Heart left ventricle (tissue), 16 donors: ENCODE measurements at regions of chr9 and their contacts with region 1.

Region 1: GRCh38 chr9:32384364-32385151 is at the start of gene ACO1:
- DNase-seq: peak; percentile 92 to 95 (median 94)
- ATAC-seq: peak; percentile 92 to 99 (median 98)
- H3K4me3 ChIP-seq: peak within 1 kb of the TSS; percentile 67 to 91 (median 83)
- H3K27ac ChIP-seq: peak within 1 kb of the TSS; percentile 52 to 93 (median 82)
- H3K4me1 ChIP-seq: peaks cover 0 to 37% (median 19%) of the 10 kb centered on the region in 12 donors
- H3K27me3 ChIP-seq: no peaks in the 10 kb centered on the region
- CTCF ChIP-seq: peak in 4 of 12 donors; percentile 19 to 35 (median 32)
- POLR2A ChIP-seq: peak; percentile 15 to 84
- total RNA-seq, gene ACO1: 44.5 to 68.3 (median 63.3) TPM

Region 2: GRCh38 chr9:32395490-32396216 is 11.1 kb after region 1 on chr9:
- intact Hi-C with region 1: loop called in 1 of 10 experiments (anchors 1 kb)
- DNase-seq: peak; percentile 39 to 73 (median 63)
- ATAC-seq: peak in 3 of 4 donors; percentile 89 to 95 (median 93)
- H3K4me3 ChIP-seq: no peak overlapping the region
- H3K27ac ChIP-seq: peak overlapping the region in 9 of 12 donors; percentile 28 to 76 (median 46)
- H3K4me1 ChIP-seq: peaks cover 0 to 22% (median 11%) of the 10 kb centered on the region in 12 donors
- H3K27me3 ChIP-seq: no peaks in the 10 kb centered on the region
- CTCF ChIP-seq: peak in 5 of 12 donors; percentile 14 to 42 (median 31)
- POLR2A ChIP-seq: no peak

Region 3: GRCh38 chr9:32426278-32426939 is 41.9 kb after region 1 on chr9:
- intact Hi-C with region 1: loop called in 7 of 10 experiments (anchors 2 to 5 kb)
- DNase-seq: no peak
- ATAC-seq: peak in 2 of 4 donors; percentile 34 to 36
- H3K4me3 ChIP-seq: no peak overlapping the region
- H3K27ac ChIP-seq: peak overlapping the region in 1 of 12 donors; percentile 7
- H3K4me1 ChIP-seq: peaks cover 0 to 5% (median 0%) of the 10 kb centered on the region in 12 donors
- H3K27me3 ChIP-seq: no peaks in the 10 kb centered on the region
- CTCF ChIP-seq: no peak
- POLR2A ChIP-seq: no peak

Region 4: DNA sequence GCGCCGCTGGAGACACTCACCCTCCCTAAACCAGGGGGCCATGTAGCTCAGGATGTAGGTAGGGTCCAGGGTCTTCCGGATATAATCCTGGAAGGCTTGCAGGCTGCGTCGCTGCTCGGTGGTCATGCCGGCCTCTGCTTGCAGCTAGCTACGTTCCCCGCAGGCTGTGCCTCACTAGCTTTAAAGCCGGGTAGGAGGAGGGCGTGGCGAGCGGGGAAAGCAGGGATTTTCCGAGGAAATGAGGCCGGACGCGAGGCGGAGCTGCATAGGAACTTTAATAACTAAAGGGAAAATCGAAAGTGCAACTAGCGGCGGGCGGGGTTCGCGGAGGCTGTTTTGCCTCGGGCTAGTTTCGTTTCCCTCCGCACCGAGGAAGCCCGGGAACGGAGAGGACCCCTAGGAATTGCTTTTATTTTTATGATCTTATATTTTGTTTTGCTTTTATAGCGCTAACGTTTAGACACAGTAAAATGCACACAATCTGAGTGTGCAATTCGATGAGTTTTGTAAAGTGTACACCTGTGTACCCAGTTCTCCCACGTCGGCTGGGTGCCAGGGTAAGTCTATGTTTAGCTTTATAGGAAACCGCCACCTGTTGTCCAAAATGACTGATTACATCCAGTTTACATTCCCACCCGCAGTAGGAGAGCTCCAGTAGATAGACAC is 141.6 kb after region 1 on chr9 and contains the start of gene RIGI:
- intact Hi-C with region 1: loop called in 6 of 10 experiments (anchors 2 to 10 kb)
- DNase-seq: peak; percentile 93 to 95 (median 93)
- ATAC-seq: peak; percentile 86 to 97 (median 95)
- H3K4me3 ChIP-seq: peak within 1 kb of the TSS; percentile 55 to 80 (median 72)
- H3K27ac ChIP-seq: peak within 1 kb of the TSS; percentile 43 to 95 (median 84)
- H3K4me1 ChIP-seq: peaks cover 4 to 51% (median 24%) of the 10 kb centered on the region in 12 donors
- H3K27me3 ChIP-seq: no peaks in the 10 kb centered on the region
- CTCF ChIP-seq: peak; percentile 19 to 65 (median 51)
- POLR2A ChIP-seq: peak in 1 of 2 donors; percentile 81
- total RNA-seq, gene RIGI: 2.0 to 18.5 (median 4.4) TPM

Region 5: GRCh38 chr9:32571969-32572899 is 187.7 kb after region 1 on chr9:
- intact Hi-C with region 1: loop called in 4 of 10 experiments (anchors 1 to 2 kb)
- DNase-seq: peak in 4 of 5 donors; percentile 46 to 79 (median 58)
- ATAC-seq: peak; percentile 83 to 89 (median 86)
- H3K4me3 ChIP-seq: peak overlapping the region; percentile 71 to 96 (median 80)
- H3K27ac ChIP-seq: peak overlapping the region; percentile 79 to 98 (median 92)
- H3K4me1 ChIP-seq: peaks cover 0 to 35% (median 21%) of the 10 kb centered on the region in 12 donors
- H3K27me3 ChIP-seq: no peaks in the 10 kb centered on the region
- CTCF ChIP-seq: peak; percentile 13 to 66 (median 49)
- POLR2A ChIP-seq: no peak

Region 6: DNA sequence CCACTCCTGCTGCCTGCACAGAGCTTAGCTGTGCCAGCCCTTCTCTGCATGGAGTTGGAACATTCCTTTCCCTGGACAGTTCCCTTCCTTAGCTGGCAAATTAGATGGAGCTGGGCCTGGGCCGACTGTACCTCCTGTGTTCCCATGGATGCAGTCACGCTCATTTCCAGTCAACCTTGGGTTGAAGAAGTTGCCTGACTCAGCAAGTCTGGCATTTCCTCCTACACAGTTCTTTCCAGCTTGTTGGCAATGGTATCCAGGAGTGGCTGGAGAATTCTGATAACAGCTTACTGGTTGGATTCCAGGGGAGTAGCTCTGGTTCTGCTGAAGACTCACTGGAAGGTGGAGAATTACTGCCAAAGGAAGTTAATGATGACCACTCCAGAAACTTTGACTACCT is 260.1 kb after region 1 on chr9:
- intact Hi-C with region 1: no loop called
- DNase-seq: no peak
- ATAC-seq: peak in 1 of 4 donors; percentile 34
- H3K4me3 ChIP-seq: no peak overlapping the region
- H3K27ac ChIP-seq: no peak overlapping the region
- H3K4me1 ChIP-seq: no peaks in the 10 kb centered on the region
- H3K27me3 ChIP-seq: peaks cover 0 to 4% (median 0%) of the 10 kb centered on the region in 9 donors
- CTCF ChIP-seq: no peak
- POLR2A ChIP-seq: no peak